ENCODE measurements at regions of chr21 and their contacts with region 1.

Region 1: GRCh38 chr21:32240851-32241687 is 37.8 kb downstream of the MIS18A start:
- DNase-seq: no peak
- ATAC-seq: no peak
- H3K4me3 ChIP-seq: no peak overlapping the region
- H3K27ac ChIP-seq: no peak overlapping the region
- H3K4me1 ChIP-seq: no peaks in the 10 kb centered on the region
- H3K27me3 ChIP-seq: peaks cover 30 to 39% of the 10 kb centered on the region in 2 experiments
- CTCF ChIP-seq: no peak
- EP300 ChIP-seq: no peak
- POLR2A ChIP-seq: no peak
- RAD21 ChIP-seq: no peak

Region 2: GRCh38 chr21:31798842-31799704 is 442.0 kb before region 1 on chr21:
- CTCF ChIA-PET with region 1: no interaction called
- POLR2A ChIA-PET with region 1: no interaction called
- in situ Hi-C with region 1: loop called (anchors 10 kb)
- intact Hi-C with region 1: no loop called
- DNase-seq: no peak
- ATAC-seq: peak; percentile 24
- H3K4me3 ChIP-seq: no peak overlapping the region
- H3K27ac ChIP-seq: no peak overlapping the region
- H3K4me1 ChIP-seq: no peaks in the 10 kb centered on the region
- H3K27me3 ChIP-seq: peaks cover 42 to 44% of the 10 kb centered on the region in 2 experiments
- CTCF ChIP-seq: no peak
- EP300 ChIP-seq: no peak
- POLR2A ChIP-seq: no peak
- RAD21 ChIP-seq: no peak